AG04450 (cell line): ENCODE measurements at regions of chr1 and their contacts with region 1.

Region 1: GRCh38 chr1:206461602-206462455 is 8.4 kb upstream of the IKBKE start:
- DNase-seq: peak; percentile 41
- H3K4me3 ChIP-seq: no peak overlapping the region
- H3K27ac ChIP-seq: no peak overlapping the region
- H3K27me3 ChIP-seq: no peaks in the 10 kb centered on the region
- CTCF ChIP-seq: peak; percentile 84

Region 2: DNA sequence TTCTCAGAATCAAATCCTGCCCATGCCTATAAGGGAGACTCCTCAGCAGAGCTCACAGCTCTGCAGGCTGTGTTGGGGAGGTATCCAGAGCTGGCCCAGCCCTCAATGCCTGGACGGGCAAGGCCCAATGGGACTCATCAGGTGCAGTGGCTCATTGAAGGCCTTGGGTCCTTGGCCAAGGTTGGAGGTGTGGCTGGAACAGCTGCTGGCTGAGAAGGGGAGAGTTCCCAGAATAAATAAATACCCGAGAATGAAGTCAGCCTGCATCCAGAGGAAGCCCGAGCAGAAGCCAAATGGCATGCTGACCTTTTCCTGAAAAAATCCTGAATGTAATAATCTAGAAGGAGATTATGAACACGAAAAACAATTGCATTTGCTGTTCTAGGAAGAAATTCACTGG is 16.7 kb before region 1 on chr1:
- CTCF ChIA-PET with region 1: interaction called, 34 read pairs
- POLR2A ChIA-PET with region 1: no interaction called
- DNase-seq: peak; percentile 27
- H3K4me3 ChIP-seq: no peak overlapping the region
- H3K27ac ChIP-seq: no peak overlapping the region
- H3K27me3 ChIP-seq: no peaks in the 10 kb centered on the region
- CTCF ChIP-seq: no peak

Region 3: DNA sequence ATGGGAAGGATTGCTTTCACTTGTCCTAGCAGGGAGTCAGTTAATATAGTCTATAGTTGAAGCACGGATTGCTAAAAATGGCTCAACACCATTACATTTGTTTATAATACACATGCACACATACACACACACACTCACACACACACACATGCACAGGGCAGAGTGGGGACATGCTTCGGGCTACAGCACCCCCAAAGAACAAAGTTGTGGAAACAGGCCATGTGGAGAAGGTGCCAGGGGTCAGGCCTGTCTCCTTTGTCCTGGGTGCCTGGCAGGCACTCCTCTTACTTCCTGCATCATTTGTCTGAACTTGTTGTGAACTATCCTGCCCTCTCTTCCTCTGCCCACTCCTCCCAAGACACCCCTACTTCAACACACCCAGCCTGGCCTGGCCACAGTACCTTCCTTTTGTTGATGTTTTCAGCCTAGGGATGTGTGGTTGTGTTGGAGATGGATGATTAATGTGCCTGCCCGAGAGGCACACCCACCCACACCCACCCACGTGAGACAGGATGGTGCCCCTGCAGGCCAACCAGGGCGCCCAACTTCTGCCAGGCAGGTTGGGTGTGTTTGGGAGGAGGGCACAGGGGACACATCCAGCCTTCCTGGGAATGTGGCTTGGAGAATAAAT is 63.0 kb after region 1 on chr1:
- CTCF ChIA-PET with region 1: no interaction called
- POLR2A ChIA-PET with region 1: no interaction called
- DNase-seq: no peak
- H3K4me3 ChIP-seq: no peak overlapping the region
- H3K27ac ChIP-seq: no peak overlapping the region
- H3K27me3 ChIP-seq: peaks cover 7% of the 10 kb centered on the region
- CTCF ChIP-seq: no peak